Common myeloid progenitor, CD34-positive (primary cell): ENCODE measurements at regions of chr1 and their contacts with region 1.

Region 1: GRCh38 chr1:165928075-165928731 is 100.8 kb downstream of the UCK2 start:
- DNase-seq: peak; percentile 58 to 78 (median 74)
- H3K4me3 ChIP-seq: no peak overlapping the region
- H3K27ac ChIP-seq: no peak overlapping the region
- H3K4me1 ChIP-seq: no peaks in the 10 kb centered on the region
- H3K27me3 ChIP-seq: peaks cover 0 to 18% (median 0%) of the 10 kb centered on the region in 5 experiments

Region 2: GRCh38 chr1:165942927-165943597 is 14.9 kb after region 1 on chr1:
- CTCF ChIA-PET with region 1: interaction called, 10 read pairs
- POLR2A ChIA-PET with region 1: no interaction called
- DNase-seq: no peak
- H3K4me3 ChIP-seq: no peak overlapping the region
- H3K27ac ChIP-seq: no peak overlapping the region
- H3K4me1 ChIP-seq: no peaks in the 10 kb centered on the region
- H3K27me3 ChIP-seq: peaks cover 0 to 1% (median 0%) of the 10 kb centered on the region in 5 experiments

Region 3: DNA sequence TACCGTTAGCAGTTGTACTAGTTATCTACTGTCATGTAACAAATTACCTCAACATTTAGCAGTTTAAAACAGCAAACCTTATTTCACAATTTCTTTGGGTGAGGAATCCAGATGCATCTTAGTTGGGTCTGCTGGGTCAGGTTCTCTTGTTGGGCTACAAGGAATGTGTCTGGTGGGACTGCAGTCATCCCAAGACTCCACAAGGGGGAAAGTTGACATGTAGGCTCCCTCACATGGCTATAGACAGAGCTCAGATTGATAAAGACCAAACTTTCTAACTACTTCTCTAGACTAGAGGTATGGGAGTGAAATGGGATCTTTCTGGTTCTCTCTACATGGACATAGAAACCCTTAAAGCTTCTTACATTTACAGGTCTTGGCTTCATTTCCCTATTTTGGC is 60.1 kb after region 1 on chr1:
- CTCF ChIA-PET with region 1: no interaction called
- POLR2A ChIA-PET with region 1: no interaction called
- DNase-seq: no peak
- H3K4me3 ChIP-seq: no peak overlapping the region
- H3K27ac ChIP-seq: no peak overlapping the region
- H3K4me1 ChIP-seq: no peaks in the 10 kb centered on the region
- H3K27me3 ChIP-seq: no peaks in the 10 kb centered on the region

Region 4: DNA sequence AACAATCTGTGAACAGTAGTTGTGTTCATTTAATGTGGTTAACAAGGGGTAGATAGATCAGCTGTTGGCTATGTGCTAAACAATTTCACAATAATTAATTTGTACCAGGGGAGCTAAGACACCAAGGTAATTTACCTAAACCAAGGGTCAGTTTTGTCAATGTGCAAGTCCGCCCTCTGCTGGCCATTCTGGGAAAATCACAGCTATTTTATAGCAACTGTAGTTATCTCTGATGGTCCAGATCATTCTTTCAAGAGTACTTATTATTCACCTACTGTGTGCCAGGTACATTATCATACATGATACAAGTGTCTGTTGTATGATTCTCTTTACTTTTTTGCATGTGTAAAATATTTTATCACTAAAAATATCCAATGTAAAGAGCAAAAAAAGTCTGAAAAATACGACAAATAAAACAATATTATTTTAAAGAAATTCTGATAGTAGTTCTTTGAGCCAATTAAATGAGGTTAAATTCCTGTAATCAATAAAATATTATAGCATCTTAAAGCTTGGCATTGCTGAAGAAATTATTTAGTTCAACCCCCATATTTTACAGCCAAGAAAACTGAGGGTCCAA is 550.9 kb after region 1 on chr1:
- CTCF ChIA-PET with region 1: interaction called, 23 read pairs
- POLR2A ChIA-PET with region 1: no interaction called
- DNase-seq: peak; percentile 33 to 55 (median 46)
- H3K4me3 ChIP-seq: no peak overlapping the region
- H3K27ac ChIP-seq: no peak overlapping the region
- H3K4me1 ChIP-seq: no peaks in the 10 kb centered on the region
- H3K27me3 ChIP-seq: peaks cover 0 to 3% (median 0%) of the 10 kb centered on the region in 5 experiments